ENCODE measurements at regions of chr1 and their contacts with region 1.

Region 1: DNA sequence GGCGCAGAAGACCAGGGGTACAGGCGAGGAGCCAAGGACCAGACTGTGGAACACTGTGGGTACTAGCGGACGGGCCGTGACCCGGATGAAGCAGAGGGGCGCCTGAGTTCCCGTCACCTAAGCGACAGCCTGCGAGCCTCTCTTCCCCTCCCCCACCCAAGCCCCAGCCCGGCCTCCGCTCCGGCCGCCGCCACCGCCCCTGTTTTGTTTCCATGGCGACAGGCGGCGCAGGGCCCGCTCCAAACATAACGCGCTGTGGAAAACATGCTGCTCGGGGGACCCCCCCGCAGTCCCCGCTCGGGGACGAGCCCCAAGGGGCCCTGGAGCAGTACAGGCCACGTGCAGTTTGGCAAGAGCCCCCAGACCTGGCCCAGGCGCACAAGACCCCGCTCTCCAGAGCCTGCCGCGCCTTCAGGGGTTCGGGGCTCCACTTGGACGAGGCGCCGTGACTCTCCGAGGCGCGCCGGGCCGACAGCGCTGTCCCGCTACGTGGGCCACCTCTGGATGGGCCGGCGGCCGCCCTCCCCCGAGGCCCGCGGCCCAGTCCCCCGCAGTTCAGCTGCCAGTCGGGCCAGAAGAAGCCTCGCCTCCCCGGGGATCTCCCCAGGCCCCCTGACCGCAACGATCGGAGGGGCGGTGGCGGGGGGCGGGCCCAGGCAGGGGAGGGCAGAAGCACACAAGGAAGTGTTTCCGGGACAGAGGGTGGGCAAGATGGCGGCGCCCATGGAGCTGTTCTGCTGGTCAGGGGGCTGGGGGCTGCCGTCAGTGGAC is at the start of gene MTX1:
- DNase-seq: peak; percentile 88
- ATAC-seq: peak; percentile 65
- H3K4me3 Mint-ChIP-seq: peak within 1 kb of the TSS; percentile 88
- H3K27ac Mint-ChIP-seq: peak within 1 kb of the TSS; percentile 89
- H3K4me1 Mint-ChIP-seq: peaks cover 19% of the 10 kb centered on the region
- H3K27me3 Mint-ChIP-seq: peaks cover 7% of the 10 kb centered on the region; the same call in 1 of the 2 replicates
- CTCF ChIP-seq: no peak
- total RNA-seq, gene MTX1: 57.5 to 62.8 TPM (median 60.4 TPM) in 3 replicates

Region 2: GRCh38 chr1:155185351-155186066 is 23.2 kb before region 1 on chr1:
- CTCF ChIA-PET with region 1: interaction called, 15 read pairs
- POLR2A ChIA-PET with region 1: no interaction called
- DNase-seq: no peak
- ATAC-seq: peak; percentile 56
- H3K4me3 Mint-ChIP-seq: no peak overlapping the region
- H3K27ac Mint-ChIP-seq: peak overlapping the region; percentile 87
- H3K4me1 Mint-ChIP-seq: peaks cover 29% of the 10 kb centered on the region
- H3K27me3 Mint-ChIP-seq: no peaks in the 10 kb centered on the region
- CTCF ChIP-seq: no peak

Region 3: GRCh38 chr1:155193275-155193990 is 15.3 kb before region 1 on chr1:
- CTCF ChIA-PET with region 1: interaction called, 37 read pairs
- POLR2A ChIA-PET with region 1: interaction called, 35 read pairs
- DNase-seq: peak; percentile 97
- ATAC-seq: peak; percentile 67
- H3K4me3 Mint-ChIP-seq: peak overlapping the region; percentile 99
- H3K27ac Mint-ChIP-seq: peak overlapping the region; percentile 99
- H3K4me1 Mint-ChIP-seq: peaks cover 34% of the 10 kb centered on the region
- H3K27me3 Mint-ChIP-seq: peaks cover 4% of the 10 kb centered on the region; the same call in 1 of the 2 replicates
- CTCF ChIP-seq: peak; percentile 98

Region 4: DNA sequence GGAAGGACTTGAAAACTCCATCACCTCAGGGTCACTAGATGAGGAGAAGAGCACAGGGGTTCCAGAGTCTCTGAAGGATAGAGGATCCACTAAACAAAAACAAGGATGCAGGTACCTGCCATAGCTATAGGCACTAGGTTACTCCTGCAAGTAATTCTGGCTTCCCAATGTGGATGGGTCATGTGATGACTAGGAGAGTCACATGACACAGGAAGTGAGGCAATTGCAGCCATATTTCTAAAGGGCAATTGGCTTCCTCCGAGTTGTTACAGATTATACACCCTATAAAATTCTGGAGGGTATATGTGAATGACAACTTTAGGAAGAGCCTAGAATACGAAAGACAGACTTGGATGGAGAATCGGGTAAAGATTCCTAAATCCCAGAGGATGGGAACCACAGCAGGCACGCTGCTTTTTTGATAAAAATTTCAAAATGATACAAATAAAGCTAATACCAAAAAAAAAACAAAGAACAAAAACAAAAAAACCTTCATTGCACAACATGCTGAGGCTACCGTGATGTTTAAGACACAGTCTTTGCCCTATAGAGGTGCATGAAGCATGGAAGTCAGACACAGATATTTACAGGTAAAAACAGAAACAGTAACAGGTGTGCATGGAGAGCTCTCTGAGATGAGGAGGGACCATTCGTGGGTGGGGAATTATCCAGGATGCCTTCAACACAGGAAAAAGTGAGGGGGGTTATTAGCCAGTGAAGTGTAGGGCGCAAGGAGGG is 10.3 kb after region 1 on chr1:
- CTCF ChIA-PET with region 1: interaction called, 11 read pairs
- POLR2A ChIA-PET with region 1: interaction called, 4 read pairs
- DNase-seq: no peak
- ATAC-seq: peak; percentile 28
- H3K4me3 Mint-ChIP-seq: peak overlapping the region; percentile 56
- H3K27ac Mint-ChIP-seq: peak overlapping the region; percentile 82
- H3K4me1 Mint-ChIP-seq: peaks cover 12% of the 10 kb centered on the region
- H3K27me3 Mint-ChIP-seq: no peaks in the 10 kb centered on the region
- CTCF ChIP-seq: no peak

Region 5: DNA sequence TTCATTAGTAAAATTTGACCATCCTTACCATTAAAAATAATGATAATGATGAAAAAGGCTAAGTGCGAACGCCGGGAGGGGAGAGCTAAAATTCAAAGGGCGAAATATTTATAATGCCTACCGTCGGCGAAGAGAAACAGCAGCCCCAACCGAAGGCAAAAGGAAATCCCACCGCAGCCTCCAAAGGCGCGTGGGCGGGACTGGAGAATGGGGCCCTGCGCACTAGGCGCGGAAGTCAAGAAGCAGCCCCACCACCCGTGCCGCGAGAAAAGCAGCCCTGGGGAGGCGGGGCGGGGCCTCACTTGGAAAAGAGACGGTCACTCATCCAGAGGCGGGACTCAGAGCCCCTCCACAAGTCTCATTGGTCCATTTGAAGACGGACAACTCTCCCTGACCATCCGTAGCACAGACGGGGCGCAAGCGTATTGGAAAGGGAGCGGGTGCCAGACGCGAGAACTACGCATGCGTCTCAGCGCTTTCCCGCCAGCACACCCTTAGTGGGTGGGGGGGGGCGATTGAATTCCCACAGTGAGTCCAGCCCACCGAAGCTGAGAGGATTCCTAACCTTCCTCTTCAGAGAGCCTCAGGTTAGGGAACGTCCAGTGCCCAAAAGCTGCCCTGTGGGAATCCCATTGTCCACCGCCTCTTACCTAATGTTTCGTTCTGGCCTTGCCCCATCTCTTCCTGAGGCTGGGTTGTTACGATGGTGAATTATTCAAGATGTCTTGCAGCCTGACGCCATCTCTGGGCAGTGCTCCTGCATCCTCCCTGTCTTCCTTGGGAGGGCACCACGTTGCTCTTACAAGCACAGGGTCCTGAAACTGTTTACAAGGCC is 18.8 kb after region 1 on chr1:
- CTCF ChIA-PET with region 1: interaction called, 13 read pairs
- POLR2A ChIA-PET with region 1: interaction called, 4 read pairs
- DNase-seq: peak; percentile 97
- ATAC-seq: peak; percentile 96
- H3K4me3 Mint-ChIP-seq: peak overlapping the region; percentile 92
- H3K27ac Mint-ChIP-seq: peak overlapping the region; percentile 97
- H3K4me1 Mint-ChIP-seq: peaks cover 22% of the 10 kb centered on the region
- H3K27me3 Mint-ChIP-seq: peaks cover 29% of the 10 kb centered on the region
- CTCF ChIP-seq: no peak

Region 6: GRCh38 chr1:155334962-155335361 is 126.2 kb after region 1 on chr1:
- CTCF ChIA-PET with region 1: no interaction called
- POLR2A ChIA-PET with region 1: no interaction called
- DNase-seq: no peak
- ATAC-seq: no peak
- H3K4me3 Mint-ChIP-seq: no peak overlapping the region
- H3K27ac Mint-ChIP-seq: peak overlapping the region; percentile 57; the same call in 1 of the 2 replicates
- H3K4me1 Mint-ChIP-seq: no peaks in the 10 kb centered on the region
- H3K27me3 Mint-ChIP-seq: no peaks in the 10 kb centered on the region
- CTCF ChIP-seq: no peak